Activated naive CD4-positive, alpha-beta T cell treated with anti-CD3 and anti-CD28 coated beads for 36 hours (primary cell): ENCODE measurements at regions of chr2 and their contacts with region 1.

Region 1: DNA sequence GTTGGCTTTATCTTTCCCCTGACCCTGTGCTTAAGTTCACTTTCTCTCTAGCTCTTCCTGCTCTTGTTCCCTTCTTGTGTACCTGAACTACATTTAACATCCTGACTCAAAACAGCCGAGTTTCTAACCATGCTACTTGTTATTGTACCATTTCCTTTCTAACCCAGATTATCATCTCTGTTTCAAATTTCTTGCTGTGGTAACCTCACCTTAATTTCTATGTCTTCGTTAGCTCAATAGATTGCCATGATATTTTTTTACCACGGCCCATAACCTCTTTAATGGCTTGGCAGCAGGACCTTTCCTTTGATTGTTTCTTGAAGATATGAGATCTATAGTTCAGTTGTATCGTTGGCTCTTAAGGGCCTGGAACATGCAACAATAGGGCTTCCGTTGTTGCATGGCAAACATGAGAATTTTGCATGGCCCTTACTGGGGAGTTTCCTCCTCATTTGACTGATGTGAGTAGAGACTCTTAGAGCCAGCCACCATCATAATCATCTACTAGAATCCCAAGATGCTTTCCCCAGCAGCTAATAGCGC is 11.1 kb downstream of the CFAP36 start:
- DNase-seq: peak; percentile 30
- H3K4me3 Mint-ChIP-seq: no peak overlapping the region
- H3K27ac Mint-ChIP-seq: peak overlapping the region; percentile 86
- H3K4me1 Mint-ChIP-seq: peaks cover 17% of the 10 kb centered on the region
- H3K27me3 Mint-ChIP-seq: no peaks in the 10 kb centered on the region

Region 2: DNA sequence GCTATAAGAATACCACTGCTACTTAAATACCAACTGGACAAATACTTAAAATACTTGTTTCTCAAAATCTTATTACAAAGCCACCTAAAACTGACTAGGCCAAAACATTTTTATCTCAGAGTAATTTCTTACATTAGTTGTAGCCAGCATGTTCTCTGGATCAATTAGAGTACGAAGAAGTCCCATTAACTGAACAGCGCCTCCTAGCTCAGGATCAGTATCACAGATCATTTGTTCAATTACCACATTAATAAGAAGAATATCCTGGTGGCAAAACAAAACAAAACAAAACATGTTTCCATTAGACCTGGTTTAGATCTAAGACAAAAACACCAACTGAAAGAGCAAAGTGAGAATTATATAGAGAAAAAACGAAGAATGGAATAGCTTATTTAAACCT is 50.8 kb after region 1 on chr2:
- CTCF ChIA-PET with region 1: no interaction called
- intact Hi-C with region 1: loop called (anchors 2 kb)
- DNase-seq: no peak
- H3K4me3 Mint-ChIP-seq: no peak overlapping the region
- H3K27ac Mint-ChIP-seq: peak overlapping the region; percentile 18
- H3K4me1 Mint-ChIP-seq: peaks cover 29% of the 10 kb centered on the region
- H3K27me3 Mint-ChIP-seq: no peaks in the 10 kb centered on the region